Calu3 (cell line): ENCODE measurements at regions of chr5 and their contacts with region 1.

Region 1: GRCh38 chr5:91225848-91226686 is 157.1 kb downstream of the ARRDC3 start:
- DNase-seq: peak; percentile 74
- H3K4me3 Mint-ChIP-seq: no peak overlapping the region
- H3K27ac Mint-ChIP-seq: no peak overlapping the region
- H3K4me1 Mint-ChIP-seq: peaks cover 33% of the 10 kb centered on the region
- H3K27me3 Mint-ChIP-seq: no peaks in the 10 kb centered on the region
- CTCF ChIP-seq: peak; percentile 52

Region 2: GRCh38 chr5:90866333-90866732 is 359.7 kb before region 1 on chr5:
- CTCF ChIA-PET with region 1: no interaction called
- intact Hi-C with region 1: loop called (anchors 2 kb)
- DNase-seq: no peak
- H3K4me3 Mint-ChIP-seq: no peak overlapping the region
- H3K27ac Mint-ChIP-seq: no peak overlapping the region
- H3K4me1 Mint-ChIP-seq: peaks cover 10% of the 10 kb centered on the region
- H3K27me3 Mint-ChIP-seq: no peaks in the 10 kb centered on the region
- CTCF ChIP-seq: peak; percentile 64

Region 3: GRCh38 chr5:91280362-91281269 is 54.5 kb after region 1 on chr5:
- CTCF ChIA-PET with region 1: no interaction called
- intact Hi-C with region 1: loop called (anchors 5 kb)
- DNase-seq: peak; percentile 95
- H3K4me3 Mint-ChIP-seq: peak overlapping the region; percentile 91
- H3K27ac Mint-ChIP-seq: peak overlapping the region; percentile 98
- H3K4me1 Mint-ChIP-seq: peaks cover 51% of the 10 kb centered on the region
- H3K27me3 Mint-ChIP-seq: no peaks in the 10 kb centered on the region
- CTCF ChIP-seq: no peak